ENCODE measurements at regions of chr6 and their contacts with region 1.

Region 1: DNA sequence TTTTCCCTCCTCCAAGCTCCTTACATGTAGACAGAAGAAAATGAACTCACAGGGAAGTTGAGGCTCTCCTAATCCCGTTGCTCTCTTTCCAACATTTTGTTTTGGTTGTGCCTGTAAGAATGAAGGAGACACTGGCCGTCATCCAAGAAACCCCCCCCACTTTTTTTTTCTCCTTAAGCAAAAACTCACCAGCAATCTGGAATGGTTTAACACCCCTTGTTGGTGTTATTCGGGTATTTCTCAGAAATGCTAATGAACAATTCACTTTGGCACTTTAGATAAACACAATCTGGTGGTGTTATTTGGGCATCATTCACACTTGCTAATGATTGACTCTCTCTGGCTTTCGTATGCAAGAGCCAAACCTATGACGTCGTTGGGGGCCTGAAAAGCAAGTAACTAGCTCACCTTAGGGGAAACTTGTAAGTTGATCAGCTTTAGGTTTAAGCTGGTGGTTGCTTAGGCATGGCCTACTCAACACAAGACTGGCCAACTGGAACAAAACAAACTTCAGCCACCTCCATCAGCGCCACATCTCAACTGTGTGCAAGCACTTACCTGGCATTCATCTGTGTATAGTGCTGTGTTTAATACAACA is 24.3 kb upstream of the OLIG3 start:
- DNase-seq: no peak
- H3K4me3 ChIP-seq: no peak overlapping the region
- H3K4me3 Mint-ChIP-seq: no peak overlapping the region
- H3K27ac ChIP-seq: no peak overlapping the region
- H3K27ac Mint-ChIP-seq: no peak overlapping the region
- H3K4me1 ChIP-seq: no peaks in the 10 kb centered on the region
- H3K4me1 Mint-ChIP-seq: peaks cover 2 to 7% (median 3%) of the 10 kb centered on the region in 4 donors
- H3K27me3 ChIP-seq: peaks cover 26% of the 10 kb centered on the region
- H3K27me3 Mint-ChIP-seq: peaks cover 41 to 62% of the 10 kb centered on the region in 2 donors

Region 2: GRCh38 chr6:135540207-135540840 is 1978.2 kb before region 1 on chr6:
- CTCF ChIA-PET with region 1: no interaction called
- POLR2A ChIA-PET with region 1: no interaction called
- intact Hi-C with region 1: no loop called
- DNase-seq: no peak
- H3K4me3 ChIP-seq: no peak overlapping the region
- H3K4me3 Mint-ChIP-seq: no peak overlapping the region
- H3K27ac ChIP-seq: no peak overlapping the region
- H3K27ac Mint-ChIP-seq: no peak overlapping the region
- H3K4me1 ChIP-seq: no peaks in the 10 kb centered on the region
- H3K4me1 Mint-ChIP-seq: peaks cover 2 to 6% (median 4%) of the 10 kb centered on the region in 4 donors
- H3K27me3 ChIP-seq: no peaks in the 10 kb centered on the region
- H3K27me3 Mint-ChIP-seq: peaks cover 10 to 14% of the 10 kb centered on the region in 2 donors

Region 3: DNA sequence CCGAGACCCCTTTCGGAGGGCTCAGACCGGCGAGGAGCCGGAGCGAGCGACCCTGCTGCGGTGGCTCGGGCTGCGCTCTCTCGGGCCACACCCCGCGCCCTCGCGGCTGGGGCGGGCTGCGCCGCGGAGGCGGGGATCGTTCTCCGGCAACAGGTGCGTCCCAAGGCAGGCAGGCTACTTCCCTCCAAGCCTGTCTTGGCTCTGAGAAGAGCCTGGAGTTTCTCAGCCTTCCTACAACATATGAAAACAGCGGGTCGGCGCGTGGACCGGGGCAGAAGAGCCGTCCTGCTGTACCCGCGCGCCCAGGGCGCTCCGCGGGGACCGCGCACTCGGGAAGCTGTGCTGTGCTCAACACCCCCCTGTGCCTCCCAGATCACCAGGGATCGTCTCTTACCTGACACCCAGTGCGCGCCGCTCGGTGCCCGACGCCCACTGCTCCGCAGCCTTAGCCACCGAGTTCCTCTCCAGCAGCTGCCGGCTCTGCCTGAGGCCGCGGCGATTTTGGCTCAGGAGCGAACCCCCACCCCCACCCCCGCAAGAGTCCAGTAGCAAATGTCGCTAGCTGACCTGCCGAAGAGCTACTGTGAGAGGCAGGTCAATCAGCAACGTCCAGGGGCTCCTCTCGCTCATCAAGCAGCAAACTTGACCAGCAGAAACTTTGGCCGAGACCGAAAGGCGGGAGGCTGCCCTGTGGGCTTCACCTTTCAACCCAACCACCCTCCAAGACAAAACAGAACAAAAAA is 20.6 kb before region 1 on chr6:
- CTCF ChIA-PET with region 1: interaction called, 5 read pairs
- POLR2A ChIA-PET with region 1: interaction called, 4 read pairs
- intact Hi-C with region 1: loop called (anchors 2 kb)
- DNase-seq: peak in 2 of 5 donors; percentile 37 to 41
- H3K4me3 ChIP-seq: peak overlapping the region in 1 of 2 donors; percentile 16
- H3K4me3 Mint-ChIP-seq: peak overlapping the region; percentile 46 to 86 (median 69)
- H3K27ac ChIP-seq: no peak overlapping the region
- H3K27ac Mint-ChIP-seq: peak overlapping the region in 2 of 7 donors; percentile 68 to 72
- H3K4me1 ChIP-seq: peaks cover 53% of the 10 kb centered on the region
- H3K4me1 Mint-ChIP-seq: peaks cover 21 to 51% (median 37%) of the 10 kb centered on the region in 4 donors
- H3K27me3 ChIP-seq: peaks cover 66% of the 10 kb centered on the region
- H3K27me3 Mint-ChIP-seq: peaks cover 55 to 59% of the 10 kb centered on the region in 2 donors

Region 4: GRCh38 chr6:137536104-137536773 is 17.8 kb after region 1 on chr6:
- CTCF ChIA-PET with region 1: interaction called, 4 read pairs
- POLR2A ChIA-PET with region 1: interaction called, 6 read pairs
- intact Hi-C with region 1: loop called (anchors 2 kb)
- DNase-seq: peak in 4 of 5 donors; percentile 14 to 63 (median 52)
- H3K4me3 ChIP-seq: no peak overlapping the region
- H3K4me3 Mint-ChIP-seq: no peak overlapping the region
- H3K27ac ChIP-seq: no peak overlapping the region
- H3K27ac Mint-ChIP-seq: no peak overlapping the region
- H3K4me1 ChIP-seq: peaks cover 30% of the 10 kb centered on the region
- H3K4me1 Mint-ChIP-seq: peaks cover 0 to 7% (median 0%) of the 10 kb centered on the region in 4 donors
- H3K27me3 ChIP-seq: no peaks in the 10 kb centered on the region
- H3K27me3 Mint-ChIP-seq: peaks cover 2 to 3% of the 10 kb centered on the region in 2 donors

Region 5: DNA sequence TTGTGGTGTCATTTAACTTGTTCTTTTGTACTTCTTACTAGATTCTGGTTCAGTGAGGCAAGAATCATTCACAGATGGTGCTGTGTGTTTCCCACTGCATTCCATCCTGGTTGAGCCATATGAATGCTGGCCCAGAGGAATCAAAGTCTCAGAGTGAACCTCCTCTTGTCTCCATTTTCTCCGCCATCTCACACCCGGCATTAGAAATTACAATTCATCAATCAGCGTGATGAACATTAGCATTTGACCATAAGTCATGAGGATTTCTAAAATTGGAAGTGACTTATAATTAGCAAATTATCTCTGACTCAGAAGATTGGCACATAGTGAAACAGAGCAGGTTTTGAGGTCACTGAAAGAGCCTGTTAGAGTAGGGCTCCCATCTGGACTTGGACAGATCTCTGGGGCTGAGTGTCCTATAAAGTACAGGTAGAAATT is 373.8 kb after region 1 on chr6:
- CTCF ChIA-PET with region 1: no interaction called
- POLR2A ChIA-PET with region 1: no interaction called
- intact Hi-C with region 1: no loop called
- DNase-seq: no peak
- H3K4me3 ChIP-seq: no peak overlapping the region
- H3K4me3 Mint-ChIP-seq: no peak overlapping the region
- H3K27ac ChIP-seq: no peak overlapping the region
- H3K27ac Mint-ChIP-seq: no peak overlapping the region
- H3K4me1 ChIP-seq: no peaks in the 10 kb centered on the region
- H3K4me1 Mint-ChIP-seq: peaks cover 0 to 7% (median 2%) of the 10 kb centered on the region in 4 donors
- H3K27me3 ChIP-seq: no peaks in the 10 kb centered on the region
- H3K27me3 Mint-ChIP-seq: no peaks in the 10 kb centered on the region

Region 6: DNA sequence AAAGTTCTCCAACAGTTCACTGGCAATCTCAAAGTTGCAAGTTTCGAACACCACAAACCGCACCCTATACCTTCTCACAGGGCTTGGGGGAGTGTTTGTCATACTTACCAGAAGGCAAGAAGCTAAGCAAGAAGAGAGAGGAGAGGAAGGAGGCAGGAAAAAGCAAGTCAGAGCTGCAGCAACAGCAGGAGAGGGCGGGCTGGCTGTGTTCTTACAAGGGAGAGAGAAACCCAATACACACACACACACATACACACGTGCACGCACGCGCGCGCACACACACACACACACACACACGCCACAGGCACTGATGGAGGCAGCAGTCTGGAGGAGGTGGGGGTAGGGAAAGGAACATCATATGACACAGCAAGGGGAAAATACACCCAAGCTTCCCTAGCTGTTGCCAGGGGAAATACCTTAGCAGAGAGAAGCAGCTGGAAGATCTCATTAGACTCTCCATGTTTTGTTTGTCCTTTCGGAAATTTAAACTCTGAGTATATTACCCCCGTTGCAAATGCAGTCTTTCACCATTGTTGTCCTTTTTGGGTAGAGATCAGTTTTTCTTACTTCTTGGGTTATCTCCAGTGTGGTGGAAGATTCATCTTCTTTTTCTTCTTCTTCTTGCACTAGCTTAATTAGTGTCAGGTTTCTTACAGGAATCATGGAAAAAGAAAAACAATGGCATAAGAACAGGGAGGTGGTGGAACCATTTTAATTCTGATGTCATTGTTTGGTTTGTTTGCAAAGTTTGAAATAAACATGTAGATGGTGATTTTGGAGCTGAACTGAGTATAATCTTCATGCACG is 1773.5 kb after region 1 on chr6 and contains the start of gene TXLNB:
- CTCF ChIA-PET with region 1: no interaction called
- POLR2A ChIA-PET with region 1: no interaction called
- intact Hi-C with region 1: no loop called
- DNase-seq: peak; percentile 81 to 95 (median 89)
- H3K4me3 ChIP-seq: peak within 1 kb of the TSS; percentile 26 to 42
- H3K4me3 Mint-ChIP-seq: peak within 1 kb of the TSS; percentile 79 to 91 (median 85)
- H3K27ac ChIP-seq: peak within 1 kb of the TSS; percentile 59
- H3K27ac Mint-ChIP-seq: peak within 1 kb of the TSS; percentile 94 to 99 (median 97)
- H3K4me1 ChIP-seq: peaks cover 59% of the 10 kb centered on the region
- H3K4me1 Mint-ChIP-seq: peaks cover 44 to 76% (median 58%) of the 10 kb centered on the region in 4 donors
- H3K27me3 ChIP-seq: no peaks in the 10 kb centered on the region
- H3K27me3 Mint-ChIP-seq: no peaks in the 10 kb centered on the region
- total RNA-seq, gene TXLNB: 1.4 to 1.6 TPM